Activated B cell treated with CpG ODN at 0.5 μM for 24 hours (primary cell): ENCODE measurements at regions of chr4 and their contacts with region 1.

Region 1: DNA sequence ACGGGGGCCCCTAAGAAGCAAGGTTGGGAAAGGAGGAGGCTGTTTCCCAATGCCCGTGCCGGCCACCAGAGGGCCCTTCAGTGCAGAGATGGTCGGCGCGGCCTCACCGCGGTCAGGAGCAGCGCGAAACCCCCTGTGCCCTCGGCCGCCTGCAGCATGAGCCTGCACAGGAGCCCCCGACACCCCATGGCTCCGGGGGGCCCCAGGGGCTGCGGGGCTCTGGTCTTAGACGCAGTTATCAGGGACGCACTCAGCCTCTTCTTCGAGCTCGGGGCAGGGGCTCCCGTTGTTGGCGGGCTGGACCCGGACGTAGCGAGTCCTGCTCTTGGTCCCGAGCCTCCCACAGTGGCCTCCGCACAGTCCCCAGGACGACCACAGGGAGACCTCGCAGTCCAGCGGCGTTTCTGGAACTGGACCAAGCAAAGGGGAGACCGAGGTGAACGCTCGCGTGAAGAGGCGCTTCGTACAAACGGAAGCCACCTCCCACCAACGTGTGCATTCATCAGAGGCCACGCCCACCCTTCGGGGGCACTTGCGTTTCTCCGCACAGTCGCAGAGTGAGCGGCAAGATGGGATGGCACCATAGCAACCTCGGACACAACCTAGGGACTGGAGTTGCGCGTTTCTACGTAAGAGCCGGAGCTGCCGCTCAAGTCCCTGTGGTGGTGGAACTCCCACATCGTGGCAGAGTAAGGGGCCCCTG is 5.0 kb downstream of the SPON2 start:
- DNase-seq: peak; percentile 79
- ATAC-seq: peak; percentile 88
- H3K4me3 Mint-ChIP-seq: peak overlapping the region; percentile 86
- H3K27ac Mint-ChIP-seq: peak overlapping the region; percentile 80
- H3K4me1 Mint-ChIP-seq: peaks cover 57% of the 10 kb centered on the region
- H3K27me3 Mint-ChIP-seq: peaks cover 2% of the 10 kb centered on the region
- CTCF ChIP-seq: peak; percentile 69

Region 2: GRCh38 chr4:1183985-1184773 is 16.8 kb after region 1 on chr4:
- CTCF ChIA-PET with region 1: interaction called, 5 read pairs
- POLR2A ChIA-PET with region 1: interaction called, 5 read pairs
- intact Hi-C with region 1: loop called (anchors 1 kb)
- DNase-seq: no peak
- ATAC-seq: peak; percentile 73
- H3K4me3 Mint-ChIP-seq: peak overlapping the region; percentile 73
- H3K27ac Mint-ChIP-seq: peak overlapping the region; percentile 72
- H3K4me1 Mint-ChIP-seq: peaks cover 34% of the 10 kb centered on the region
- H3K27me3 Mint-ChIP-seq: no peaks in the 10 kb centered on the region
- CTCF ChIP-seq: no peak

Region 3: GRCh38 chr4:1218634-1219565 is 51.5 kb after region 1 on chr4:
- CTCF ChIA-PET with region 1: interaction called, 5 read pairs
- POLR2A ChIA-PET with region 1: no interaction called
- intact Hi-C with region 1: loop called (anchors 1 kb)
- DNase-seq: peak; percentile 41
- ATAC-seq: peak; percentile 88
- H3K4me3 Mint-ChIP-seq: peak overlapping the region; percentile 75
- H3K27ac Mint-ChIP-seq: peak overlapping the region; percentile 81
- H3K4me1 Mint-ChIP-seq: peaks cover 64% of the 10 kb centered on the region
- H3K27me3 Mint-ChIP-seq: no peaks in the 10 kb centered on the region
- CTCF ChIP-seq: no peak

Region 4: GRCh38 chr4:1266881-1267763 is 99.7 kb after region 1 on chr4:
- CTCF ChIA-PET with region 1: interaction called, 44 read pairs
- POLR2A ChIA-PET with region 1: interaction called, 8 read pairs
- intact Hi-C with region 1: loop called (anchors 1 kb)
- DNase-seq: no peak
- ATAC-seq: peak; percentile 61
- H3K4me3 Mint-ChIP-seq: peak overlapping the region; percentile 84
- H3K27ac Mint-ChIP-seq: peak overlapping the region; percentile 89
- H3K4me1 Mint-ChIP-seq: peaks cover 31% of the 10 kb centered on the region
- H3K27me3 Mint-ChIP-seq: no peaks in the 10 kb centered on the region
- CTCF ChIP-seq: no peak

Region 5: DNA sequence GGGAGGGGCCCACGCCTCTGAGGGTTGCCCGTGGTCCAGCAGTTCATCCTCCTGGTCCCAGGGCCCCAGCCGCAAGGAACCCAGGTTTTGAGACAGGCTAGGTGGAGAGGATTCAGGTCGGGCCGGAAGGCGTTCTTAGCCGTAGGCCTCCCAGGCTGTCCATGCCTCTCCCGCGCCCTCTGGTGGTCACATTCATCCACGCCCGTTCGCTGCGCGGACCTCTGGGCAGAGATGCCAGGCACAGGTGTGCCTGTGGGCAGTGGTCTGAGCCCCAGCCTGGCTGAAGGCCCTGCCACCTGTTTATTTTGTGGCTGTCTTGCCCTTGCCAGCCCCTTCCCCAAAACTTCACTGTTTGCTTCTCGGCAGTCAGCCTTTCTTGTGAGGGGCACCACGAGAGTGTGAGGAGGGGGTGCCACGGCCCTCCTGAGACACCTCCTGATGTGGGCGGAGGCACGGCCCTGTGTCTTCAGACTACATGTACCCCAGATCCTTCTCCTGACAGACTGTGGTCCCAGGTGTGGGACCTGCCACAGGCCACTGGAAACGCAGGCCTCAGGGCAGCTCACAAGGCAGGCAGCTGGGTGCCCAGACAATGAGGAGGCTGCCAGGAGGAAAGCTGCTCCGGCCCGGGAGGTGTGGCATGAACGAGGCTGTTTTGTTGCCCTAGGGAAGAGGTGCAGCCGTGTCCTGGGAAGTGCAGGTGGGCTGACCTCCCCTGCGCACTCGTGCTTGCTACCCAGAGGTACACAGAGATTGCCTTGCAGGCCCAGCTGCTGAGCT is 184.6 kb after region 1 on chr4:
- CTCF ChIA-PET with region 1: no interaction called
- POLR2A ChIA-PET with region 1: interaction called, 4 read pairs
- intact Hi-C with region 1: loop called (anchors 1 kb)
- DNase-seq: peak; percentile 84
- ATAC-seq: peak; percentile 25
- H3K4me3 Mint-ChIP-seq: no peak overlapping the region
- H3K27ac Mint-ChIP-seq: peak overlapping the region; percentile 18
- H3K4me1 Mint-ChIP-seq: peaks cover 26% of the 10 kb centered on the region
- H3K27me3 Mint-ChIP-seq: no peaks in the 10 kb centered on the region
- CTCF ChIP-seq: no peak

Region 6: DNA sequence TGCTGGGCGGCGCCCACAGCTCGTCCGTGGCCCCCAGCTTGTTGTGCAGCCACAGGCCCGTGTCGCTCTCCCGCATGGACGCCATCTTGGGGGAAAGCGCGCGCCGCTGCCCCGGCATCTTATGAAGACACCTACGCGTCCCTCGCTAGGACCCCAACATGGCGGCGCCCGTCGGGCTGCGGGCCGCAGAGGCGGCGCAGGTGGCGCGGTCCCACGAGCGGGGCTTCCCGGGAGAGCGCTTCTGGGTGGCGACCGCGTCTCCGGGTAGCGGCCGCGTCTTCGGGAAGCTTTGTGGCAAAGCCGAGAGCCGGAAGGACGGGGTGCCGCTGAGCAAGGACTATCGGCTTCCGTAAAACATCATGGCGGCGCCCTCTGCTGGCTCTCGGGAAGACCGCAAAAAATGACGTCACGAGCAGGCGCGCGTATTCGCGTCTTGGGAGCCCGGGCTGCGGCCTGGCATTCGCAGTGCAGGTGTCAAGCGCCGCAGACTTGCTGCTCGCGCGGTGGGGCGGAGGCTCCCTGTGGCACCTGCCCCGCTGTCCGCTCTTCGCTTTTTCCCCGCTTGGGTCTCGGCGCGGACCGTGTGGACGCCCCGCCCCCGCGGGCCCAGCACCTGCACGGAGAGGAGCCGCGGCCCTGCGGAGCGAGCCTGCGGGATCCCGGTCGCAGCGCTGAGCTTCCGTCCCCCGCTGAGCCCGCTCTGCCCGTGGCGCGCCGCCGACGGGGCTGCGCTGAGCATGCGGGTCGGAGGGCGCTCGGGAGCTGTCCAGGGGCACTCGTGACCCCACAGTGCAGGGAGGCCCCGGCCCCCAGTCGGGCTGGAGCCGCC is 841.7 kb after region 1 on chr4 and contains the start of gene NELFA:
- CTCF ChIA-PET with region 1: no interaction called
- POLR2A ChIA-PET with region 1: no interaction called
- intact Hi-C with region 1: no loop called
- DNase-seq: peak; percentile 93
- ATAC-seq: peak; percentile 80
- H3K4me3 Mint-ChIP-seq: peak within 1 kb of the TSS; percentile 90
- H3K27ac Mint-ChIP-seq: peak within 1 kb of the TSS; percentile 91
- H3K4me1 Mint-ChIP-seq: peaks cover 32% of the 10 kb centered on the region
- H3K27me3 Mint-ChIP-seq: peaks cover 4% of the 10 kb centered on the region
- CTCF ChIP-seq: no peak
- total RNA-seq, gene NELFA: 44.7 and 49.9 TPM in 2 replicates